ENCODE measurements at regions of chr4 and their contacts with region 1.

Region 1: DNA sequence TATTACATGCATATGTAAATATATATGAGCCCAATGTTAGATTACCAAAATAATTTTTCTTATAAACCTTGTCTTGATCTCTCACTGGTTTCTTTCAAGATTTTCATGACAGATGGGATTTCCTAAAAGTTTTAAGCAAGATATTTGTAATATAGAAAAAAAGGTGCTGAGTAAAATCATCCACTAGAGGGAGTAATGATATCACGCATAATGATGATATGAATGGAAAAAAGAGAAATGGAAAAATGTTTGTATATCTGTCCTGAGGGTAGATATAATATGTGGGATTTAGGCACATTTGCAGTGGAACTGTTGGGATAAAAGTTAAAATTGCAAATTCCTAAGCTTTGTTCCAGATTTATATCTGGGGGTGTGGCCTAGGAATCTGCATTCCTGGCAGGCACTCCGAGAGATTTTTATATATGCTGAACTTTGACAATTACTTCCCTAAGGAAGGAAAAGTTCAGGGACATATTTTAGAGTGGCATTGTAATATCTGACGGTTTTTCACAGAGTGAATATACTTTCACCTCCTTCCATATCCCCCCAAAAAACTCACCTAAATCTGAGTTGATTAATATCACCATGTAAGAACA is 60.5 kb downstream of the TMA16 start:
- H3K4me3 Mint-ChIP-seq: no peak overlapping the region
- H3K27ac Mint-ChIP-seq: no peak overlapping the region
- H3K4me1 Mint-ChIP-seq: peaks cover 58% of the 10 kb centered on the region
- H3K27me3 Mint-ChIP-seq: no peaks in the 10 kb centered on the region

Region 2: DNA sequence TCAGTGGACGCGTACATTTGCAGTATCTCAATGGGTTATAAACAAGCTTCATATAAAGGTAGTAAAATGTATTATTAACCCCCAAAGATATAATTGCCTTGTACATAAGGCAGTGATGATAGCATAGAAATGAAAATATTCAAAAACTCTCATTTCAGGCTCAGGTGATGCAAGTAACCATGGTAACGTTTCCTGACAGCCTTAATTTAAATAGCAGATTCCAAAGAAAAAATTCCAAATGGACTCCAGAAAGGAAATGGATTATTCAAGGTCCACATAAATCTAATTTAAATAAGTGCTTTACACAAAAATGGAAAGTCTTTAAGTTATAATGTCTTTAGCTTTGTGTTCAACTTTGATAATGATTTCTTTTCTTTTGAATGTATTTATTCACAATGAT is 1042.3 kb before region 1 on chr4:
- intact Hi-C with region 1: no loop called
- H3K4me3 Mint-ChIP-seq: no peak overlapping the region
- H3K27ac Mint-ChIP-seq: no peak overlapping the region
- H3K4me1 Mint-ChIP-seq: no peaks in the 10 kb centered on the region
- H3K27me3 Mint-ChIP-seq: no peaks in the 10 kb centered on the region

Region 3: DNA sequence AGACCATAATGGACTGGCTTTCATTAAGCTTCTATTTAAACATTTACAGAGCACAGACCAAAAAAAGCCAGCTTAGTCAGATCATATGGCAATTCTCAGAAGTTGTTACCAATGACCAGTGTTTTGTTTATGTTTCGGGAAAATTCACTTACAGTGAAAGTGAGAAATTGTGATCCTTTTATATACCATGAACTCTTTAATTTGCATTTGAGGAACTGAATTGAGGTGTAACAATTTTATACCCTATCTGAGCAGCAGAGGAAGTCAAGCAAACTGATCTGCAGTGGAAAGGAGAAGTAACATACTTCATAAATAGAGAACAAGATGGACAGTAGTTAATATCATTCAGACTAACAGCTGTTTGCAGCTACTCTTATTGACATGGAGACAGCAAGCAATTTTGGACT is 36.6 kb after region 1 on chr4:
- intact Hi-C with region 1: loop called (anchors 5 kb)
- H3K4me3 Mint-ChIP-seq: peak overlapping the region; percentile 44
- H3K27ac Mint-ChIP-seq: peak overlapping the region; percentile 83
- H3K4me1 Mint-ChIP-seq: peaks cover 45% of the 10 kb centered on the region
- H3K27me3 Mint-ChIP-seq: no peaks in the 10 kb centered on the region

Region 4: GRCh38 chr4:163611784-163612445 is 56.9 kb after region 1 on chr4:
- intact Hi-C with region 1: loop called (anchors 5 kb)
- H3K4me3 Mint-ChIP-seq: peak overlapping the region; percentile 83
- H3K27ac Mint-ChIP-seq: peak overlapping the region; percentile 94
- H3K4me1 Mint-ChIP-seq: peaks cover 46% of the 10 kb centered on the region
- H3K27me3 Mint-ChIP-seq: no peaks in the 10 kb centered on the region

Region 5: DNA sequence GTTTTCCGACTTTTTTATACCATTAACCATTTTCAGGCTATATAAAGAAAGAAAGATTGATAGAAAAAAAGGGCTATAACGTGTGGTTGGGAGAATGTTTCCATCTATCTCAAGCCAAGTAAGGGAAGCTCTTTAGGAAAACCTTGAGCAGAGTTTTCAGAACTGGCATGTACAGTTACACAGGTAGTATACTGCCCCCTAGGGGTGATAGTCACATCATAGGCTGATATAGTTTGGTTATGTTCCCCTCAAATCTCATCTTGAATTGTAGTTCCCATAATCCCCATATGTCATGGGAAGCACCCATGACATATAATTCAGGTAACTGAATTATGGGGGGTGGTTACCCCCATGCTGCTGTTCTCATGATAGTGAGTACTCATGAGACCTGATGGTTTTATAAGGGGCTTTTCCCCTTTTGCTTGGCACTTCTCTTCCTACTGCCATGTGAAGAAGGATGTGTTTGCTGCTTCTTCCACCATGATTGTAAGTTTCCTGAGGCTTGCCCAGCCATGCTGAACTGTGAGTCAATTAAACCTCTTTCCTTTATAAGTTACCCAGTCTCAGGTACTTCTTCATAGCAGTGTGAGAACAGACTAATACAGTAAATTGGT is 126.3 kb after region 1 on chr4:
- intact Hi-C with region 1: loop called (anchors 1 kb)
- H3K4me3 Mint-ChIP-seq: no peak overlapping the region
- H3K27ac Mint-ChIP-seq: no peak overlapping the region
- H3K4me1 Mint-ChIP-seq: peaks cover 21% of the 10 kb centered on the region
- H3K27me3 Mint-ChIP-seq: peaks cover 2% of the 10 kb centered on the region

Region 6: DNA sequence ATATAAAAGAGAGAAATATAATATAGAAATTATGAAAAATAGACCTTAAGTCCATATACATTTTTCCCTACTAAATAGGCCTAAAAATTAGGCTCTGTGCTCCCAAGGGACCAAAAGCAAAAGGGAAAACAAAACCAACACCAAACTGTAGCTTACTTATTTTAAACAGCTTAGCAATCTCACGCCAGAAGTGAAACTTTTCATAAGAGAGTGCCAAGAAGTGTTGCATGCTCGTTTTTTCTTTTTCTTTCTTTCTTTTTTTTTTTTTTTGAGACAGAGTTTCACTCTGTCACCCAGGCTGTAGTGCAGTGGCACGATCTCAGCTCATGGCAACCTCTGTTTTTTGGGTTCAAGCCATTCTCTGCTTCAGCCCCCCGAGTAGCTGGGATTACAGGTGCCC is 189.9 kb after region 1 on chr4:
- intact Hi-C with region 1: no loop called
- H3K4me3 Mint-ChIP-seq: no peak overlapping the region
- H3K27ac Mint-ChIP-seq: no peak overlapping the region
- H3K4me1 Mint-ChIP-seq: peaks cover 8% of the 10 kb centered on the region
- H3K27me3 Mint-ChIP-seq: no peaks in the 10 kb centered on the region

Region 7: GRCh38 chr4:163755013-163755412 is 200.0 kb after region 1 on chr4:
- intact Hi-C with region 1: loop called (anchors 2 kb)
- H3K4me3 Mint-ChIP-seq: no peak overlapping the region
- H3K27ac Mint-ChIP-seq: no peak overlapping the region
- H3K4me1 Mint-ChIP-seq: no peaks in the 10 kb centered on the region
- H3K27me3 Mint-ChIP-seq: peaks cover 3% of the 10 kb centered on the region

Region 8: DNA sequence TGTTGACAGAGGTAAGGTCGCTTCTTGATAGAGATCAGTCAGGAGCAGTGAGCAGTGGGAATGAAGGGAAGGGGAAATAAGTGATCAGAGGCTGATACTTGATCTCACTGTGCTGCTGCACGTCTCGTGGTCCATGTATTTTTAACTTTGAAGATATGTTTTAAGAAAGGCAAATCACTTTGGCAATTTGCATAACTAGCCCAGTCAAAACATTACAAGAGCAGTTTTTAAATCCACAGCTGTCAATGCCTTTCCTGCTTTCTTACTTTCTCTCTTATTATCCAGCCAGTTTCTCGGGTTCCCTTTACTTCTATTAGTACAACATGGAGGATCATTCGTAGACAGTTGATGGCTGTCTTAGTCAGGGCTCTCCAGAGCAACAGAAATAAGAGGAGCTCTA is 412.3 kb after region 1 on chr4:
- intact Hi-C with region 1: no loop called
- H3K4me3 Mint-ChIP-seq: no peak overlapping the region
- H3K27ac Mint-ChIP-seq: no peak overlapping the region
- H3K4me1 Mint-ChIP-seq: no peaks in the 10 kb centered on the region
- H3K27me3 Mint-ChIP-seq: no peaks in the 10 kb centered on the region

Region 9: GRCh38 chr4:165079476-165079875 is 1524.5 kb after region 1 on chr4:
- intact Hi-C with region 1: no loop called
- H3K4me3 Mint-ChIP-seq: no peak overlapping the region
- H3K27ac Mint-ChIP-seq: no peak overlapping the region
- H3K4me1 Mint-ChIP-seq: peaks cover 5% of the 10 kb centered on the region
- H3K27me3 Mint-ChIP-seq: no peaks in the 10 kb centered on the region